ENCODE measurements at regions of chr10 and their contacts with region 1.

Region 1: DNA sequence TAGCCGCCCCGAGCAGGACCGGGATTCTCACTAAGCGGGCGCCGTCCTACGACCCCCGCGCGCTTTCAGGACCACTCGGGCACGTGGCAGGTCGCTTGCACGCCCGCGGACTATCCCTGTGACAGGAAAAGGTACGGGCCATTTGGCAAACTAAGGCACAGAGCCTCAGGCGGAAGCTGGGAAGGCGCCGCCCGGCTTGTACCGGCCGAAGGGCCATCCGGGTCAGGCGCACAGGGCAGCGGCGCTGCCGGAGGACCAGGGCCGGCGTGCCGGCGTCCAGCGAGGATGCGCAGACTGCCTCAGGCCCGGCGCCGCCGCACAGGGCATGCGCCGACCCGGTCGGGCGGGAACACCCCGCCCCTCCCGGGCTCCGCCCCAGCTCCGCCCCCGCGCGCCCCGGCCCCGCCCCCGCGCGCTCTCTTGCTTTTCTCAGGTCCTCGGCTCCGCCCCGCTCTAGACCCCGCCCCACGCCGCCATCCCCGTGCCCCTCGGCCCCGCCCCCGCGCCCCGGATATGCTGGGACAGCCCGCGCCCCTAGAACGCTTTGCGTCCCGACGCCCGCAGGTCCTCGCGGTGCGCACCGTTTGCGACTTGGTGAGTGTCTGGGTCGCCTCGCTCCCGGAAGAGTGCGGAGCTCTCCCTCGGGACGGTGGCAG is at the start of gene MGMT:
- DNase-seq: peak; percentile 86
- H3K4me3 Mint-ChIP-seq: peak within 1 kb of the TSS; percentile 73
- H3K27ac Mint-ChIP-seq: no peak within 1 kb of the TSS
- H3K4me1 Mint-ChIP-seq: no peaks in the 10 kb centered on the region
- H3K27me3 Mint-ChIP-seq: no peaks in the 10 kb centered on the region
- CTCF ChIP-seq: no peak
- total RNA-seq, gene MGMT: 16.5 and 18.0 TPM in 2 replicates

Region 2: DNA sequence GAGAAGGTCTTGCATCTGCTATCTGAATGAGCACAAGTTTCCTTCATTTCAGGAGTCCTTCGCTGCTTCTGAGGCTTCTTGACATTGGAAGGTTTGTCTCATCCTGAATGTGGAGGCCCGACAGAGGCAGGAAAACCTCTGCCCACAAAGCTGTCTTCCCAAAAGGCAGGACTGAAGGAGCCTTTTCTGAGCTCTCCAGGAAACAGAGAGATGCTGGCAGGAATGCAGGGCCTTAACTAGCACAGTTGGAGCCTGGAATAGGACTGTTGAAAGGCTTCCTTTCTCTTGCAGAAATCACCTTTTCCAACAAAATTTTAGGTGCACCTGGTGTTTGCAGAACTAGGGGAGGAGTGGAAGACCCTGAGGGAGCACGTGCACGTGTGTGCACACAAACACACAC is 703.2 kb before region 1 on chr10:
- CTCF ChIA-PET with region 1: no interaction called
- POLR2A ChIA-PET with region 1: no interaction called
- intact Hi-C with region 1: no loop called
- DNase-seq: no peak
- H3K4me3 Mint-ChIP-seq: no peak overlapping the region
- H3K27ac Mint-ChIP-seq: no peak overlapping the region
- H3K4me1 Mint-ChIP-seq: no peaks in the 10 kb centered on the region
- H3K27me3 Mint-ChIP-seq: no peaks in the 10 kb centered on the region
- CTCF ChIP-seq: no peak

Region 3: GRCh38 chr10:129631006-129631405 is 164.2 kb after region 1 on chr10:
- CTCF ChIA-PET with region 1: no interaction called
- POLR2A ChIA-PET with region 1: no interaction called
- intact Hi-C with region 1: loop called (anchors 10 kb)
- DNase-seq: peak; percentile 46
- H3K4me3 Mint-ChIP-seq: no peak overlapping the region
- H3K27ac Mint-ChIP-seq: no peak overlapping the region
- H3K4me1 Mint-ChIP-seq: no peaks in the 10 kb centered on the region
- H3K27me3 Mint-ChIP-seq: no peaks in the 10 kb centered on the region
- CTCF ChIP-seq: no peak

Region 4: GRCh38 chr10:130136226-130137089 is 669.6 kb after region 1 on chr10 and contains the start of gene GLRX3:
- CTCF ChIA-PET with region 1: no interaction called
- POLR2A ChIA-PET with region 1: interaction called, 3 read pairs
- intact Hi-C with region 1: loop called (anchors 10 kb)
- DNase-seq: peak; percentile 83
- H3K4me3 Mint-ChIP-seq: peak within 1 kb of the TSS; percentile 86
- H3K27ac Mint-ChIP-seq: peak within 1 kb of the TSS; percentile 94
- H3K4me1 Mint-ChIP-seq: peaks cover 15% of the 10 kb centered on the region
- H3K27me3 Mint-ChIP-seq: no peaks in the 10 kb centered on the region
- CTCF ChIP-seq: no peak
- total RNA-seq, gene GLRX3: 154 and 177 TPM in 2 replicates

Measured in MCF 10A (cell line).